Activated CD8-positive, alpha-beta memory T cell treated with anti-CD3 and anti-CD28 coated beads, Interleukin-2, amount 10 ng/mL, durations not matched to agents 7 days and 5 days (primary cell): ENCODE measurements at regions of chr2 and their contacts with region 1.

Region 1: GRCh38 chr2:10408649-10409579 is 39.2 kb downstream of the ODC1 start:
- DNase-seq: peak; percentile 89
- ATAC-seq: peak; percentile 79
- H3K4me3 Mint-ChIP-seq: peak overlapping the region; percentile 43
- H3K27ac Mint-ChIP-seq: peak overlapping the region; percentile 85
- H3K4me1 Mint-ChIP-seq: peaks cover 36% of the 10 kb centered on the region
- H3K27me3 Mint-ChIP-seq: no peaks in the 10 kb centered on the region

Region 2: GRCh38 chr2:9984217-9984739 is 424.6 kb before region 1 on chr2:
- CTCF ChIA-PET with region 1: interaction called, 11 read pairs
- DNase-seq: no peak
- ATAC-seq: peak; percentile 78
- H3K4me3 Mint-ChIP-seq: no peak overlapping the region
- H3K27ac Mint-ChIP-seq: no peak overlapping the region
- H3K4me1 Mint-ChIP-seq: peaks cover 13% of the 10 kb centered on the region
- H3K27me3 Mint-ChIP-seq: peaks cover 28% of the 10 kb centered on the region

Region 3: DNA sequence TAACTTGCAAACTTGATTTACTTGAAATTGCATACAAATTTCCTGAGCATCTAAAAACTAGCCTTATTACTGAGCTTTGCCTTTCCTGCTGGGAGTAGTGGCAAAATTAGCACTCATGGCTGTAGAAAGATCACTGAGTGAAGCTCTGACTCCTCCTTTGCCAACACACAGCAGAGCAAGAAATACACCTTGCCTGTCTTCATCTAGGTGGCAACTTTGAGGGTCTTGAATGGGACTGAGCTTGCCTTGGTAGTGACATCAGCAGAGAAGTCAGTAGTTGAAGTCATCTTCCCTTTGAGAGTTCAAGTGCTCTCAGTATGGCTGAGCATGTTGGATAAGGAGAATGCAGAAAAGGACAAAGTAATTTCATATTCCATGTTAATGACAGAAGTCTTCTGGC is 280.5 kb before region 1 on chr2:
- CTCF ChIA-PET with region 1: interaction called, 69 read pairs
- DNase-seq: no peak
- ATAC-seq: no peak
- H3K4me3 Mint-ChIP-seq: peak overlapping the region; percentile 29
- H3K27ac Mint-ChIP-seq: peak overlapping the region; percentile 30
- H3K4me1 Mint-ChIP-seq: peaks cover 73% of the 10 kb centered on the region
- H3K27me3 Mint-ChIP-seq: no peaks in the 10 kb centered on the region

Region 4: DNA sequence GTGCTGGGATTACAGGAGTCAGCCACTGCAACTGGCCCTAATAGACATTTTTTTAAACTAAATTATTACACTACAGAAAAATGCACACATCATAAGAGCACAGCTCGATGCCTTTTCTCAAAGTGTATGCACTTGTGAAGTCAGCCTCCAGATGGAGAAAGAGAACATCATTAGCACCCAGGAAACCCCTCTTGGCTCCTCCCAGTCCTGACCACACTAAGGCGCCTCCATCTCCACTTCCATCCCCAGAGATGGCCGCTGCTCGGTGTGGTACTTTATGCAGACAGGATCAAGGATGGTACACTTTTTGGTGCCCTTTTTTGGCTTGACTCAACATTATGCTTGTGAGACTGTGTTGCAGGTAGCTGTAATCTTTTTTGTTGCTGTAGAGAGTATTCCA is 251.6 kb before region 1 on chr2:
- CTCF ChIA-PET with region 1: interaction called, 21 read pairs
- DNase-seq: no peak
- ATAC-seq: no peak
- H3K4me3 Mint-ChIP-seq: no peak overlapping the region
- H3K27ac Mint-ChIP-seq: no peak overlapping the region
- H3K4me1 Mint-ChIP-seq: peaks cover 14% of the 10 kb centered on the region
- H3K27me3 Mint-ChIP-seq: no peaks in the 10 kb centered on the region

Region 5: GRCh38 chr2:10267551-10268465 is 141.1 kb before region 1 on chr2:
- CTCF ChIA-PET with region 1: interaction called, 55 read pairs
- DNase-seq: no peak
- ATAC-seq: no peak
- H3K4me3 Mint-ChIP-seq: no peak overlapping the region
- H3K27ac Mint-ChIP-seq: no peak overlapping the region
- H3K4me1 Mint-ChIP-seq: peaks cover 3% of the 10 kb centered on the region
- H3K27me3 Mint-ChIP-seq: no peaks in the 10 kb centered on the region

Region 6: GRCh38 chr2:10302479-10303180 is 106.3 kb before region 1 on chr2 and contains the start of gene HPCAL1:
- CTCF ChIA-PET with region 1: interaction called, 111 read pairs
- DNase-seq: peak; percentile 90
- ATAC-seq: peak; percentile 77
- H3K4me3 Mint-ChIP-seq: peak within 1 kb of the TSS; percentile 97
- H3K27ac Mint-ChIP-seq: peak within 1 kb of the TSS; percentile 76
- H3K4me1 Mint-ChIP-seq: peaks cover 62% of the 10 kb centered on the region
- H3K27me3 Mint-ChIP-seq: no peaks in the 10 kb centered on the region
- total RNA-seq, gene HPCAL1: 29.0 to 47.0 TPM

Region 7: GRCh38 chr2:10434886-10435819 is 26.2 kb after region 1 on chr2:
- CTCF ChIA-PET with region 1: interaction called, 70 read pairs
- DNase-seq: peak; percentile 77
- ATAC-seq: peak; percentile 43
- H3K4me3 Mint-ChIP-seq: no peak overlapping the region
- H3K27ac Mint-ChIP-seq: no peak overlapping the region
- H3K4me1 Mint-ChIP-seq: peaks cover 10% of the 10 kb centered on the region
- H3K27me3 Mint-ChIP-seq: peaks cover 4% of the 10 kb centered on the region

Region 8: DNA sequence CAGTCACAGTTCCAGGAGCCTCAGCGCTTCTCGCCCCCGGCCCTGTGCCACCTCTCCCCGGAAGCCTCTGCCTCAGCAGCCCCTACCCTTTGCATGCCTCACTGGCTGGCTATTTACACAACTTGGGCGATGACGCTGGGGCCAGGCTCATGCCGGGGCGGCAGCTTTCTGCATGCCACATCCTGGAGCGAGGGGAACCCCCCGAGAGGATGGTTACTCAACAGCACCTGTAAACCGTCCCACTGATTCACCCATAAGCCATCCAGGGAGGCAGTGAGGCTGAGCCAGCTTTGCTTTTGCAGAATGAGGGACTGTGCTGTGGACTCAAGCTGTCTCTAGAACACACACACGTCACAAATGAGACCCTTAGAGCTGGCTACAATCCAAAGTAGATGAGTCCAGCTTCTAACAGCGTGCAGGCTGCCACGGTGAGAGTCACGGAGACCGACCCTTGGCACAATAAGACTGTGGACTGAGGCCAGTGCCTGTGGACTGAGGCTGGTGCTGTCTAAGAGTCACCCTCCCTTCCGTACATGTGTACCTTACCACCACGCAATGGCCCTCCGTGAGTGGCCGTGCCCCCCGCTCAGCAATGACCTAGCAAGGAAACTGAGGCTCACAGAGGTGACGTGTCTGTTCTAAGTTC is 84.8 kb after region 1 on chr2:
- CTCF ChIA-PET with region 1: no interaction called
- DNase-seq: peak; percentile 93
- ATAC-seq: peak; percentile 98
- H3K4me3 Mint-ChIP-seq: no peak overlapping the region
- H3K27ac Mint-ChIP-seq: peak overlapping the region; percentile 43
- H3K4me1 Mint-ChIP-seq: peaks cover 23% of the 10 kb centered on the region
- H3K27me3 Mint-ChIP-seq: peaks cover 42% of the 10 kb centered on the region

Region 9: DNA sequence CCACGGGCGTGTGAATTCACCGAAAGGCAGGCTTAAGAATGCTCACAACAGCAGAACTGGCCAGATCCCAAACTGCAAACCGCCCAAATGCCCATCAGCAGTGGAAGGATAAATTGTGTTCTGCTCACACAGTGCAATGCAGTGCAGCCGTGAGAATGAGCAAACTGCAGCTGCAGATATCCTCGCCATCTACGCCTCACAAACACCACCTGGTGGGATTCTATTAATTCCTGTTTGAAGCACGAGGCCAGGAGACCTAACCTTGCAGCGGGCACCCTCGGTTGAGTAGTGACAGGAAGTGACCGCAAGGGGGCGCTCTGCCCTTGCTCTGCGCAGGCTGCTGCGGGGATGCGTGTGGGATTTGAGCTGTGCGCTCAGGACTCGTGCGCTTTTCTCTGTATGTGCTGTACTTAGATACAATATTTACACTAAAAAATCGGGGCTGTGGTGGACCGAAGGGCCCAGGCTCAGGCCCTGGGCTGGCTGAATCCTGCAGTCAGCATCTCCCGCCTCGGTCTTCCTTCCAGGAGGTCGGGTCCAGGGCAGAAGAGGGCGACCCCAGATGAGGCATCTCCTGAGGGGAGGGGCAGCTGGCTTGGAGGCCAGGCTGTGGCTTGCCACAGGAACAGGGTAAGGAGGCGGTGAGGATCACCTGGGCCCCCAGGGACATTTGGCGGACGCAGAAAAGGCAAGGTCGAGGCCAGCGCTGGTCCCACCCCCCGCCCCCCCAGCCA is 423.5 kb after region 1 on chr2:
- CTCF ChIA-PET with region 1: no interaction called
- DNase-seq: peak; percentile 84
- ATAC-seq: peak; percentile 90
- H3K4me3 Mint-ChIP-seq: no peak overlapping the region
- H3K27ac Mint-ChIP-seq: no peak overlapping the region
- H3K4me1 Mint-ChIP-seq: peaks cover 4% of the 10 kb centered on the region
- H3K27me3 Mint-ChIP-seq: peaks cover 51% of the 10 kb centered on the region